ENCODE measurements at regions of chr18 and their contacts with region 1.

Region 1: DNA sequence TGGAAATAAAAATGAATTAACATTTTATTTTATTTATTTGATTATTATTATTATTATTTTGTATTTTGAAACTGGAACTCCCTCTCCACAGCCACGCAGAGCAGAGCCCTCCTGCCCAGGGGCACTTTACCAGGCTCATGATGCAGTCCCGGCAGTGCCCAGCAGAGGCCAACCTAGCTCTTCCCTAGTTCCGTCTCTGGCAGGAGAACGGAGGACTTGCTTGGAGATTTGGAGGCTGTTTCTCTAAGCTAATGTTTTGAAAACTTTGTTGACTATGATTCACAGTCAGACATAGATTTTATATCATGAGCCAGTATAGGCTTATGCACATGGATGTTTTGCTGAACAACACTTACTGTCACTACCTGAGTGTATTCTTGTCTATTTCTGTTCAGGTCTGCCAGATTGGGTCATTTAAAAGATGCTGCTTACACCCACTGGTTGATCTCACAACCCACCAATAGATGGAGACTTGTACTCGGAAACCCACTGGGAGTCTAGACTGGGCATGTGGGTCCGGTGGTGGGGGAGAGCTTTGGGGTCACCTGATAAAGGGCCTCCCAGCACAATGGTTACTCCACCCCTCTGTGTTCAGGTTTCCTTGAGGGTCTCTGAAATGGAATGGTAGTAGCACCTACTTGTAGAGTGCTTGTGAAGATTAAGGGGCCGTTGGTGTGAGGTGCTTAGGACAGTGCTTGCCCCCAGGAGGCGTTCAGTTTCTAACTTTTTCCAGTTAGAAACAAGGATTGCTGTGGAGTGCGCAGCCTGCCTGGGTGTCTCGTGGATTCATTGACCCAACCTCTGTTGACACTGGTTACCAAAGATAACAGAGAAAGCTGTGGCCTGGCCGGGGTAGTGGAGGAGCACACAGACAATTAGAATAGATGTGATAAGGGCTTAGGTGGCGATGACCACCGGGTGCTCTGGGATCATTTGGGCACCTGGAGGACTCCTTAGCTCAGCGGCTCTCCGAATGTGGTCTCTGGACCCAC is 177.3 kb downstream of the HAUS1 start:
- DNase-seq: peak; percentile 56
- H3K4me3 ChIP-seq: no peak overlapping the region
- H3K27ac ChIP-seq: no peak overlapping the region
- H3K4me1 ChIP-seq: no peaks in the 10 kb centered on the region
- CTCF ChIP-seq: peak; percentile 77

Region 2: DNA sequence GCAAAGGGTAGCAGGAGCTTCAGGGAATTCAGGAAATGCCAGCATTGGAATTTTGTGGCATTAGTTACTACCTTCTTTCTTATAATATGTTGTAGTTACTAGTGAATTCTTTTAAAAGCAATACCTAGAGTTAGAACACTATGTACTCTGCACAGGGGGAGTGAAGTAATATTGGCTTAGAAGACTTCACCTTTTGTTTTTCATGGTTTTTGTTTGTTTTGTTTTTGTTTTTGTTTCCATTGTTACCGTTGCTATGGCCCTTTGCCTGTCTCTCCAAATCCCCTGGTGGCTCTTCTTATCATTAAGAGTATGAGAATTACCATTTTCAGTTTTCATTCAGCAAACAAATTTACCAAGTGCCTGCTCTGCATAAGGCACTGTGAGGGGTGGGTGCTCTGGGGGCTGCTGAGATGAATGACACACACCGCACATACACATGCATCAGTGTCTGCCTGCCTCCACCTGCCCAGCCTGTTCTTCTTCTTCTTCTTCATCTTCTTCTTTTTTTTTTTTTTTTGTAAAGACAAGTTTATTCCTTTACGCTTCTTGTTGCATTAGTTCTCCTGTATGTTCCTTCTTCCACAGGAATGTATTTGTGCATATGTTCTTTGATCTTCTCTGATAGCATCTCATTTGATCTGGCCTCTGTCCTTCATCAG is 17.1 kb before region 1 on chr18:
- CTCF ChIA-PET with region 1: no interaction called
- POLR2A ChIA-PET with region 1: no interaction called
- intact Hi-C with region 1: no loop called
- DNase-seq: no peak
- H3K4me3 ChIP-seq: no peak overlapping the region
- H3K27ac ChIP-seq: no peak overlapping the region
- H3K4me1 ChIP-seq: peaks cover 8% of the 10 kb centered on the region
- CTCF ChIP-seq: no peak

Region 3: DNA sequence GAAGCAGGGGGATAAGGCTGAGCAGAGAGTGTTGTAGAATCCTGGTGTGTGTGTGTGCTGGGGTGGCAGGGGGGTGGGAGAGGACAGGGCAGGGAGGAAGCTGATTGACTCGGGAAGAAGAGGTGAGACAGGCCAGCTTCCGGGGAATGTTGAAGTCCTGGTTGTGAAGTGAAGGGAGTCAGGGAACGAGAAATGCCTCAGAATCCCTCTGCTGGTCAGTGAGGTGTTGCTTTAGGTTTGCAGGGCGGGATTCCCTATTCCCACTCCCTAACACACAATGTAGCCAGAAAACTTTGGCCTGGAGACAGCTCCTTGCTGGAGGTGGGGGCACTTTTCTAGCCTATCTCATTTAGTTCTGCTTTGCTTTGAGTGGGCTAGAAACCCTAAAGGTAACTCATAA is 87.8 kb after region 1 on chr18:
- CTCF ChIA-PET with region 1: no interaction called
- POLR2A ChIA-PET with region 1: no interaction called
- intact Hi-C with region 1: loop called (anchors 10 kb)
- DNase-seq: no peak
- H3K4me3 ChIP-seq: no peak overlapping the region
- H3K27ac ChIP-seq: no peak overlapping the region
- H3K4me1 ChIP-seq: no peaks in the 10 kb centered on the region
- CTCF ChIP-seq: no peak

Region 4: DNA sequence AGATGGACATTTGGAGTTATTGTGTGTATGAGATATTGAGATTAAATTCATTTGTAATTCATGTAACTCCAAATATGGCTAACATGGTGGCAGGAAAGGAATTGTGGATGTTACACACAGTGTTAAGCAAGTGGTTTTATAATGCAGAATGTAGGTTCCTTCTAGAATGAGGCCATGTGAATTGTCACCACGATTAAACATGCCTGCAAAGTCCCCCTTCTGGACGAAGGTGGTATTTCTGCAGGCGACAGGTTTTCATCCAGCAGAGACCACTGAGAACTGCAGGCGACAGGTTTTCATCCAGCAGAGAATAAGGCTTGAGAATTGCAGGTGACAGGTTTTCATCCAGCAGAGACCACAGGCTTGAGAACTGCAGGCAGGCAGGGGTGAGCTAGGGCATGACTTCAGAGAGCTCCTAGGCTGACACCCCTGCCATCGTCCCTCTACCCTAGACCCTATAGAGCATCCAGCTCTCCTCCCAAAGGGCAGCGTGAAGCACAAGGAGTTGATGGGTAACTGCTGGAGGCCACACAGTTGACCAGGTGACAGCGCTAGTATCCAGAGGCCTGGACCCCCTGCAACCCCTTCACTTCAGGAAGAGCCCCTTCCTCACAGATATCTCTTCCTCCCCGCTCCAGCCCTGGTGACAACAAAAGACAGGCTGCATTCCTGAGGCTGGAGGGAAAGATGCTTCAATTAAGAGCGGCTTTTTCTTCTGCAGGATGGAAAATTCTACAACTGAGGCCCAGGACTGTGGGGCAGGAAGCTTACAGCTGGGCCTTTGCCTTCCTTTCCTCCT is 199.8 kb after region 1 on chr18:
- CTCF ChIA-PET with region 1: interaction called, 3 read pairs
- POLR2A ChIA-PET with region 1: no interaction called
- intact Hi-C with region 1: loop called (anchors 1 kb)
- DNase-seq: peak; percentile 39
- H3K4me3 ChIP-seq: no peak overlapping the region
- H3K27ac ChIP-seq: no peak overlapping the region
- H3K4me1 ChIP-seq: no peaks in the 10 kb centered on the region
- CTCF ChIP-seq: peak; percentile 70

Region 5: DNA sequence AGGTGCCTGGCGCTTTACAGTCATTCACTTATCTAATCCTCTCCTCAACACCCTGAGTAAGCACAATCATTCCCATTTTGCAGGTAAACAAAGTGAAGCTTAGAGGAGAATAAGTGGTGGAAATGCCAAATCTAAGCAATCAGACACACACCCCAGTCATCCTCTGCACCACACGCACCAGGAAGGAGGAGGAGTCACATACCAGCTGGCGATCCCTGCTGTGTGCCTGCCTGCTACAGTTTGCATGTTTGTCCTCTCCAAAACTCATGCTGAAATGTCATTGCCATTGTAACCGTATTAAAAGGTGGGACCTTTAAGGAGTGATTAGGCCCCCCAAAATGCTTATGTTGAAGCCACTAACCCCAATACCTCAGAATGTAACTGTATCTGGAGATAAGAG is 281.8 kb after region 1 on chr18:
- CTCF ChIA-PET with region 1: no interaction called
- POLR2A ChIA-PET with region 1: no interaction called
- intact Hi-C with region 1: no loop called
- DNase-seq: no peak
- H3K4me3 ChIP-seq: no peak overlapping the region
- H3K27ac ChIP-seq: no peak overlapping the region
- H3K4me1 ChIP-seq: no peaks in the 10 kb centered on the region
- CTCF ChIP-seq: no peak

Region 6: GRCh38 chr18:46660955-46661749 is 379.7 kb after region 1 on chr18:
- CTCF ChIA-PET with region 1: no interaction called
- POLR2A ChIA-PET with region 1: no interaction called
- intact Hi-C with region 1: loop called (anchors 1 kb)
- DNase-seq: no peak
- H3K4me3 ChIP-seq: no peak overlapping the region
- H3K27ac ChIP-seq: no peak overlapping the region
- H3K4me1 ChIP-seq: no peaks in the 10 kb centered on the region
- CTCF ChIP-seq: no peak